HCT116 (cell line): ENCODE measurements at regions of chr13 and their contacts with region 1.

Region 1: DNA sequence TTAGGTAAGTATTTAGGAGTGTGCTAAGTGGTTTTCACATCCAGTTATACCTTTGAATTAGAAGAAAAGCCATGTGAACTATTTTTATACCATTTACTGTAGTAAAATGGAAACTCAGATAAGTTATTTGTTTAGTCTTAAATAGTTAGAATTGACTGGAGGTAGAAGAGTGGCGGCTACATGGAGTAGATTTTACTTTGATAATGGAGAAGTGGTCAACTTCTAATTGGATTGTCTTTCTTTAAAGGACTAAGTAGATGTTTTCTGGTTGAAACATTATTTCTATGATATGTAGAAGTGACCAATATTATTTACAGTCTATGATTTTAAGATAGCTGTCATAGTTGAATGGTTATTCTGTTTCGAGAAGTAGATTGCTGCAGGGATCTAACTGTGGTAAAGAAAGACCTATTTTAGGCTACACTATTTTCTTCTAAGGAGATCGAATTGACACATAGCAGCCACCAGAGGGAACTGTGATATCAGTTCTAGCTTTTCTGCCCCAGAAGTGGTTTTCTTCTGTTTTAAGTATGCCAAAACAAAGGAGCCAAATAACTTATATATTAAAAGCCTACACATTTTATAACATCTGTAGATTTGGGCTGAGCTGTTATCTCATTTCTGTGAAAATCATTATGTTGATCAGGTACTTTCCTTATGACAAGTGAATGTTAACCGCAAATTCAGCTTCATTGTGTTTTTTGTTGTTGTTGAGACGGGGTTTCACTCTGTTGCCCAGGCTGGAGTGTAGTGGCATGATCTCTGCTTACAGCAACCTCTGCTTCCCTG is 26.1 kb downstream of the ZMYM2 start:
- DNase-seq: peak; percentile 12
- ATAC-seq: peak; percentile 76
- H3K4me3 ChIP-seq: no peak overlapping the region
- H3K27ac ChIP-seq: no peak overlapping the region
- H3K4me1 ChIP-seq: peaks cover 3 to 4% of the 10 kb centered on the region in 2 experiments; a peak in 2 of 4 replicates
- H3K27me3 ChIP-seq: no peaks in the 10 kb centered on the region
- CTCF ChIP-seq: peak; percentile 20 to 74 (median 63); a peak in 4 of 6 replicates
- POLR2A ChIP-seq: no peak
- RAD21 ChIP-seq: peak; percentile 47

Region 2: DNA sequence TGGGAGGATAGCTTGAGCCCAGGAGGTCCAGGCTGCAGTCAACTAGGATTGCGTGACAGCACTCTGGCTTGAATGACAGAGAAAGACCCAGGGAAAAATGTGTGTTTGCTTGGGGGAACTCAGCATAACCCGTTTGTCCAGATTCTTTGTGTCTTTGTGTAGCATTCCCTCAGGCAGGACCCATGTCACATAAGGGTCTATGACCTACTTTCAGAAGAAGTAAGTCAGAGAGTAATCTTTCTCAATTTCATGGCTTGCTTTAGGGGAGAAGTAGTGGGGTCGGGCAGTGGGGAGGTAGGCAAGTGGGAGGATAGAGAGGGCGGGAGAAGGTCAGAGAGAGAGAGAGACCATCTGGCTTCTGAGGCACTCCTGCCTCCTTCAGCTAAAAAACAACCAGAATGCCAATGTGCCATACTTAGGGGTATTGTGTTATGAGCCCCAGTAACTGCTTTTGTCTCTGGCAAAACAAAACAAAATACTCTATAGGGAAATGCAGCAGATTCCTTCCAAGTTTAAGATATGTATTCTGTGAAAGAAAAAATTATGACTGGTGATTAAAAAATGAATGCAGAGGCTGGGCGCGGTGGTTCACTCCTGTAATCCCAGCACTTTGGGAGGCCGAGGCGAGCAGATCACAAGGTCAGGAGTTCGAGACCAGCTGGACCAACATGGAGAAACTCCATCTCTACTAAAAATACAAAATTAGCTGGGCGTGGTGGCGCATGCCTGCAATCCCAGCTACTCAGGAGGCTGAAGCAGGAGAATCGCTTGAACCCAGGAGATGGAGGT is 189.8 kb before region 1 on chr13:
- CTCF ChIA-PET with region 1: no interaction called
- POLR2A ChIA-PET with region 1: no interaction called
- RAD21 ChIA-PET with region 1: no interaction called
- intact Hi-C with region 1: no loop called
- DNase-seq: peak; percentile 56
- ATAC-seq: peak; percentile 88
- H3K4me3 ChIP-seq: peak overlapping the region in 1 of 2 experiments; percentile 32; a peak in 2 of 4 replicates
- H3K27ac ChIP-seq: peak overlapping the region; percentile 41; the same call in 1 of the 2 replicates
- H3K4me1 ChIP-seq: peaks cover 19 to 29% of the 10 kb centered on the region in 2 experiments
- H3K27me3 ChIP-seq: no peaks in the 10 kb centered on the region
- CTCF ChIP-seq: no peak
- POLR2A ChIP-seq: no peak
- RAD21 ChIP-seq: no peak

Region 3: DNA sequence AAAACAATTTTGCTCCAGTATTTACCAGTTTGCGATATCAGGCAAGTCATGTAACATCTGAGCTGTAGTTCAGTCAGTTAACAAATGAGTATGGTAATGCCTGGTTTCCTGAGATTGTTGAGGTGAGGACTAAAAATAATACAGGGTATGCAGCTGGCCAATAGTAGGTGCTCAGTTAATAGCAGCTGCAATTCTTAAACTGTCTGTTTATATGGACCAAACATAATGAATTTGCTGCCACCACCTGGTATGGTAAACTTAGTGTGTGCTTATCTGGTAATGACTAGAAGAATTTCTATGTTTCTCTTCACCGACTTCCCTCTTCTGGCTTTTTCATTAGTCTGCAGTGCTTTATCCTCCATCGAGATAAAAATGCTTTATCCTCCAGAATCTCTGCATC is 17.0 kb before region 1 on chr13:
- CTCF ChIA-PET with region 1: interaction called, 11 read pairs
- POLR2A ChIA-PET with region 1: no interaction called
- RAD21 ChIA-PET with region 1: no interaction called
- intact Hi-C with region 1: no loop called
- DNase-seq: no peak
- ATAC-seq: peak; percentile 57; the same call in 1 of the 2 replicates
- H3K4me3 ChIP-seq: no peak overlapping the region
- H3K27ac ChIP-seq: no peak overlapping the region
- H3K4me1 ChIP-seq: no peaks in the 10 kb centered on the region
- H3K27me3 ChIP-seq: no peaks in the 10 kb centered on the region
- CTCF ChIP-seq: no peak
- POLR2A ChIP-seq: no peak
- RAD21 ChIP-seq: 0 out of 2 replicates have a peak, but pooled peaks have one; percentile 15